ENCODE measurements at regions of chr13 and their contacts with region 1.

Region 1: GRCh38 chr13:41061075-41061913 is at the start of gene WBP4:
- DNase-seq: peak; percentile 91 to 93
- ATAC-seq: peak; percentile 74 to 76
- H3K4me3 ChIP-seq: peak within 1 kb of the TSS; percentile 71 to 90 (median 86)
- H3K27ac ChIP-seq: peak within 1 kb of the TSS; percentile 90 to 100 (median 98)
- H3K4me1 ChIP-seq: peaks cover 64 to 67% of the 10 kb centered on the region in 2 donors
- H3K27me3 ChIP-seq: no peaks in the 10 kb centered on the region
- CTCF ChIP-seq: peak in 2 of 5 experiments; percentile 3 to 24
- POLR2A ChIP-seq: peak; percentile 74 to 80
- total RNA-seq, gene WBP4: 20.2 to 31.3 (median 25.5) TPM

Region 2: DNA sequence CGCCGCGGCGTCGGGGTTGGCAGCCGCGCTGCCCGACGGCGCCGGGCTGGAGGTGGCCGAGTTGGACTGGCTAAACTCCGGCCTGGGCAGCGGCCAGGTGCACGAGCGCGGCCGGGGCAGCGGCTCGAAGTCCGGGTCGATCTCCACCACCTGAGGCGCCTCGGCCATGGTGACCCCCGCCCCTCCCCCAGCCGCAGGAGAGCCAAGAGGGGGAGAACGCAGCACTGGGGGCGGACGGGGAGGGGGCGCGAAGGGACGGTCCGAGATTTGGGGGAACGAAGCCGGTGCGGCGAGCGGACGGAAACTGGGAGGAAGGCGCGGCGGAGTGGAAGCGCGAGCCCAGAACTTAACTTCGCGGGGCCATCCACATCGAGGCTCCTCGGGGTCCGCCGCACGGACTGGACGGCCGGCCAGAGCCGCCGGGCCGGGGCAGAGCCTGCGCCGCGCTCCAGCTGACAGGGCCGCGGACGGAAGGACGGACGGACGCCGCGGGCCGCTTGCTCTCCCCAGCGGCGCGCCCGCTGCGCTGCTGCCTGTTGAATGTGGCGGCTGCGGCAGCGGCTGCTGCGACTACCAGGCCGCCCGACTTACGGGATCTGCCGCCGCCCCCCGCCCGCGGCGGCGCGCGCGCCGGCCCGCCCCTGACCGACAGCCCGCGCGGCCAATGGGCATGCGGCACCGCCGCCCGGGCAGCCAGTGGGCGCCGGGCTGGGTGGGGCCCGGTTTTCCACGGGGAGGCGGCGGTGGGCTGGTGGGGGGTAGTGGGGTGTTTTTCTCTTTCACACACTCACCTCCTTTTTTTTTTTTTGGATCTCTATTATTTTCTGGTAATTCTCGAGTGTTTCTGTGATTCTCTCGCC is 395.0 kb before region 1 on chr13 and contains the start of gene FOXO1:
- in situ Hi-C with region 1: no loop called
- intact Hi-C with region 1: loop called (anchors 10 kb)
- DNase-seq: peak; percentile 80 to 91
- ATAC-seq: peak; percentile 51 to 55
- H3K4me3 ChIP-seq: peak within 1 kb of the TSS; percentile 84 to 96 (median 93)
- H3K27ac ChIP-seq: peak within 1 kb of the TSS; percentile 96 to 99 (median 98)
- H3K4me1 ChIP-seq: peaks cover 20 to 30% of the 10 kb centered on the region in 2 donors
- H3K27me3 ChIP-seq: no peaks in the 10 kb centered on the region
- CTCF ChIP-seq: peak in 1 of 5 experiments; percentile 15
- POLR2A ChIP-seq: peak; percentile 98 to 99
- total RNA-seq, gene FOXO1: 117 to 250 (median 159) TPM

Region 3: GRCh38 chr13:40922437-40923040 is 138.8 kb before region 1 on chr13:
- in situ Hi-C with region 1: loop called in 1 of 4 experiments (anchors 10 kb)
- intact Hi-C with region 1: loop called (anchors 5 kb)
- DNase-seq: no peak
- ATAC-seq: no peak
- H3K4me3 ChIP-seq: no peak overlapping the region
- H3K27ac ChIP-seq: no peak overlapping the region
- H3K4me1 ChIP-seq: peaks cover 9 to 13% of the 10 kb centered on the region in 2 donors
- H3K27me3 ChIP-seq: no peaks in the 10 kb centered on the region
- CTCF ChIP-seq: no peak
- POLR2A ChIP-seq: no peak

Region 4: GRCh38 chr13:41019011-41019487 is 42.2 kb before region 1 on chr13 and contains the start of gene ELF1:
- in situ Hi-C with region 1: no loop called
- intact Hi-C with region 1: loop called (anchors 5 kb)
- DNase-seq: peak; percentile 32 to 40
- ATAC-seq: peak; percentile 84 to 96
- H3K4me3 ChIP-seq: peak within 1 kb of the TSS in 3 of 4 donors; percentile 2 to 23 (median 18)
- H3K27ac ChIP-seq: peak within 1 kb of the TSS; percentile 66 to 77 (median 72)
- H3K4me1 ChIP-seq: peaks cover 48 to 69% of the 10 kb centered on the region in 2 donors
- H3K27me3 ChIP-seq: no peaks in the 10 kb centered on the region
- CTCF ChIP-seq: no peak
- POLR2A ChIP-seq: peak in 1 of 2 donors; percentile 23
- total RNA-seq, gene ELF1: 24.8 to 48.7 (median 33.7) TPM

Region 5: GRCh38 chr13:41244556-41244955 is 183.3 kb after region 1 on chr13:
- in situ Hi-C with region 1: no loop called
- intact Hi-C with region 1: loop called (anchors 10 kb)
- DNase-seq: peak; percentile 79 to 91
- ATAC-seq: peak; percentile 81 to 89
- H3K4me3 ChIP-seq: no peak overlapping the region
- H3K27ac ChIP-seq: peak overlapping the region; percentile 77 to 82 (median 79)
- H3K4me1 ChIP-seq: peaks cover 44 to 58% of the 10 kb centered on the region in 2 donors
- H3K27me3 ChIP-seq: no peaks in the 10 kb centered on the region
- CTCF ChIP-seq: no peak
- POLR2A ChIP-seq: no peak

Region 6: DNA sequence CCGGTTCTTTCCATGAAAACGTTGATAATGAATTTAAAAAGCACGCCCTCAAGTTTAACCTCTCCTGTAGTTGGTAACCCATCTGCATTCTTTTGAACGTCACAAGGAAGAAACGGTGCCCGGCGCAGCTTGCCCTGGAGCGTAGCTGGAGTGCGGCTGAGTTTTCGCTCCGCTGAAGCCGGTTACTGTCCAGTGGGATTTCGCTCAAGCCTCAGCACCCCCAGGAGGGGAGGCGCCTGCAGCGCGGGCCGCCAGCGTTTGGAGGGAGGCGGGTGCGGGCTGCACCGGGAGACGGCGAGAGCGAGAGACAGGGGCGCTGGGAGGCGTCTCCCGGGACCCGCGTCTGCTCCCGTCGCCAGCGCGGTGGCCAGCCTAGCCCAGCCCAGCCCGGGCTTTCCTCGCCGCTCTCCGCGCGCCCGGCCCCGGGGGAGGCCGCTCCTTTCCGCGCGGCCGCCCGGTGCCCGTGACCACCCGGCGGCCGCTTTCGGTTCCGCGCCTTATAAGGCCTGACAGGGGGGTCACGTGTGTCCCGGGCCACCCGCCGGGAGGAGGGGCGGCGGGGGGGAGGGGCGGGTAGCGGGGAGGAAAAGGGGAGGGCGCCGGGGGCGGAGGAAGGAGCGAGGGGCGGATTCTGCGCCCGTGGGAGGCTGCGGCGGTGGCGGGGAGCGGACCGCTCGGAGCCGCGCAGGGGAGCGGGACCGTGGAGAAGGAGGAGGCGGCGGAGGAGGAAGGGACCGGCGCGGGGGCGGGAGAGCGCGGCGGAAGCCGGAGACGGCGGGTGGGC is 978.8 kb after region 1 on chr13:
- in situ Hi-C with region 1: no loop called
- intact Hi-C with region 1: loop called (anchors 10 kb)
- DNase-seq: peak; percentile 89
- ATAC-seq: peak; percentile 84 to 86
- H3K4me3 ChIP-seq: peak overlapping the region; percentile 72 to 95 (median 80)
- H3K27ac ChIP-seq: peak overlapping the region; percentile 88 to 98 (median 92)
- H3K4me1 ChIP-seq: peaks cover 0 to 10% of the 10 kb centered on the region in 2 donors
- H3K27me3 ChIP-seq: no peaks in the 10 kb centered on the region
- CTCF ChIP-seq: peak in 1 of 5 experiments; percentile 18
- POLR2A ChIP-seq: peak; percentile 90 to 96